Common myeloid progenitor, CD34-positive (primary cell): ENCODE measurements at regions of chr10 and their contacts with region 1.

Region 1: DNA sequence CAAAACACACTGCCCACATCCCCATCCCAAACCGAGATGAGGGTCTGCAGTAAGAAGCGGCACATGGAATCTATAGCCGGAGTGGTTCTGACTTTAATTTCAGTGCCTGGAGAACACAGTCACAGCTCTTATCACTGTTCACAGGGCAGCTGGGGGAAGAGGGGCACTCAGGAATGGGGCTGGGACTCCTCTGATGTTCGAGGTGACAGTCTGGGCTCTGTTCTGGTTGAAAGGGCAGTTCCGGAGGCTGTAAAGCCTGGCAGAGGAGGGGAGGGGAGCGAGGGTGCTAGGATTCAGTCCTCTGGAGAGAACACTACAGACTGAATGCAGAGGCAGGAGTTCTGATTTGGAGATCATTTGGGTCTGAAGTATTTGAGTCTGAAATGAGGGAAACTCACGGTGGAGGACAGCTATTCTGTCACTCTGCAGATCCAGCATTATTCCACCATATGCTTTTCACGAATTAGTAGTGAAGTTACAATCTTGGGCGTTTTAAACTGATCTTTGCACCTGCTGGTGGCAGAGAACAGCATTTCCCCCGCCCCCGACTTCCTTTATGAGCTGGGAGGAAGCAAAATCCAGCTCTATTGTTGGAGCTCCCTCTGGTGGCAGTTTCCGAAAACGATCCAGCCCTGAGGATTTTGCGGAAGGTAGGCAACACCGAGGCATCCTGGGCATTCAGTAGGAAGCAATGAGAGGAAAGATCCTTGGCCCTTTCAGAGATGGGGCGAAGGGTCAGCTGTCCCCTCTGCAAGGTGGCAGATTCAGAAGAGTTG is 22.7 kb upstream of the KCNK18 start:
- DNase-seq: peak; percentile 87 to 93 (median 92)
- H3K4me3 ChIP-seq: peak overlapping the region in 6 of 7 experiments; percentile 55 to 80 (median 68)
- H3K27ac ChIP-seq: no peak overlapping the region
- H3K4me1 ChIP-seq: peaks cover 5 to 16% (median 15%) of the 10 kb centered on the region in 4 experiments
- H3K27me3 ChIP-seq: peaks cover 21 to 49% (median 30%) of the 10 kb centered on the region in 5 experiments

Region 2: DNA sequence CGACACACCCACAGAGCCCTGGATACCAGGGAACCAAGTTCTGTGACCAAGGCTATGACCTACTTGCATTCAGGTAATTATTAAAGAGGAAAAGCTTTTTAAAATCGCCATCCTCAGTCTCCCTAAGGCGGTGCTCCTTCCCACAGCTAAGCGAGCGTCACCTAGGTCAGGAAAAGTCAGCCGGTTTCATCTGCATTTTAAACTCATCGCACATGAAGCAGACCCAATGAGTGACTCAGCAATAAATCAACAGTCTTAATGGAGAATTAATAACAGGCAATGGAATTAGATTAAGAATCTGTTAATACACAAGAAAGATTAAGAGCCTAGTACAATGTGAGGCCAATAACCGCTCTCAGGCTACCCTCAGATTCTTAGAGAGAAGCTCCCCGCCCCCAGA is 491.5 kb before region 1 on chr10:
- CTCF ChIA-PET with region 1: interaction called, 14 read pairs
- POLR2A ChIA-PET with region 1: no interaction called
- DNase-seq: no peak
- H3K4me3 ChIP-seq: no peak overlapping the region
- H3K27ac ChIP-seq: no peak overlapping the region
- H3K4me1 ChIP-seq: no peaks in the 10 kb centered on the region
- H3K27me3 ChIP-seq: peaks cover 0 to 4% (median 0%) of the 10 kb centered on the region in 5 experiments

Region 3: DNA sequence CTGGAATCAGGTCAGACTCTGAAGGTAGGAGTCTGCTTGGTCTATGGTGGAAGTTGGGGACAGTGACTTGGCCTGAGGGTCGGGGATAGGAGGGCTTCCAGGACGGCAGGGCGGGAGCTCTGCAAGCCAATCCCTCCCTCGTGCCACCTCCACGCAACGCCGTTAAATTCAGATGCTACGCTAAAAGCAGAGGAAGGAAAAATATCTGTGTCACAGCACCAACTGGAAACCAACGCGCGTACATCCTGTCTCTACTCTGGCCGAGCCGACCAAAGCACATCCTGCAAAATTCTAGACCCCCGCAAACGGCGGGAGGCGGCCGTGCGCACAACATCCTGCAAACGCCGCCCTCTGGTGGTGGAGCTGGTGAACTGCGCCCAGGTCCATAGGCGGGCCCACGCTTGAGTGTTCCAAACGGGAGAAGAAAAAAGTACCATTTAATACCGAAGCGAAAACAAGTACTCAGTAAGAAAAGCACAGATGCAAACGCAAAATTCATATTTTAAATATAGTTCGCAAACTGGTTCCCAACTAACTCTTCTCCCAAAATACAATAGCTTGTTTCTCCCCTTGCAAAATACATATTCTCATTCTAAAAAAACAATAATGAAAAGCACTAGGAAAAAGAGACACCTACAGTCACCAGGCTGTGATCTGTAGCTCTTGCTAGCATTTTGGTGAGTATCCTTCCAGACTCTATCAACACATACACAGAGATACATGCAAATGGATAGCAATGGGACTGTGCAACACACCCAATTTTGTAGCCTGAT is 386.5 kb before region 1 on chr10:
- CTCF ChIA-PET with region 1: interaction called, 21 read pairs
- POLR2A ChIA-PET with region 1: no interaction called
- DNase-seq: peak; percentile 83 to 88 (median 87)
- H3K4me3 ChIP-seq: peak overlapping the region in 5 of 7 experiments; percentile 30 to 70 (median 38)
- H3K27ac ChIP-seq: no peak overlapping the region
- H3K4me1 ChIP-seq: peaks cover 0 to 5% (median 2%) of the 10 kb centered on the region in 4 experiments
- H3K27me3 ChIP-seq: peaks cover 0 to 6% (median 0%) of the 10 kb centered on the region in 5 experiments

Region 4: DNA sequence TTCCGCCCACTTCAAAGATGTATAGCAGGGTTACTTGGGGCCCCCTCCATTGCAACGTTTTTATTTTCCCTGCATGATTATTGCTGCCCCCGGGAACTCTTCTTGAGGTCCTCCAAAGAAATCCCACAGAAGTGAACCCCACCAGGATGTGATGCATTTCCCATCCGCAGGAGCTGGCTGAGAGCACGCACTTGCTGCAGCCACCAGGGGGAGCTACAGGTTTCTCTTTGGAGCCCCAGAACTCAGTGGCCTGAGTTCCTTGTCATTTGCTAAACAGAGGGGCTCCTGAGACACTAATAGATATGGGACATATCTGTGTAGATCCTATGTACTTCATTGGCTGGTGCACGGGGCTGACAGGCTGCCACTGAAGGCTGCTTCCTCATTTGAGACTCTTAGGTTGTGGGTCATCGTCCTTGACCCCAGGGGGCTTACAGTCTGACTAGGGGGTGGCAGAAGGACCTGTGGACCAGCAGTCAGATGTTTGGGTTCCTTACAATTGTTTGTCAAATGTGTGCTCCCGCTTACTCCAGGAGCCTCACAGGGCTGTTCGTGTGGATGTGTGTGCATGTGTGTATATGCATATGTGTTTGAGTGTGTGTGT is 377.6 kb before region 1 on chr10:
- CTCF ChIA-PET with region 1: interaction called, 107 read pairs
- POLR2A ChIA-PET with region 1: no interaction called
- DNase-seq: peak; percentile 74 to 85 (median 82)
- H3K4me3 ChIP-seq: no peak overlapping the region
- H3K27ac ChIP-seq: no peak overlapping the region
- H3K4me1 ChIP-seq: no peaks in the 10 kb centered on the region
- H3K27me3 ChIP-seq: peaks cover 3 to 14% (median 8%) of the 10 kb centered on the region in 5 experiments

Region 5: DNA sequence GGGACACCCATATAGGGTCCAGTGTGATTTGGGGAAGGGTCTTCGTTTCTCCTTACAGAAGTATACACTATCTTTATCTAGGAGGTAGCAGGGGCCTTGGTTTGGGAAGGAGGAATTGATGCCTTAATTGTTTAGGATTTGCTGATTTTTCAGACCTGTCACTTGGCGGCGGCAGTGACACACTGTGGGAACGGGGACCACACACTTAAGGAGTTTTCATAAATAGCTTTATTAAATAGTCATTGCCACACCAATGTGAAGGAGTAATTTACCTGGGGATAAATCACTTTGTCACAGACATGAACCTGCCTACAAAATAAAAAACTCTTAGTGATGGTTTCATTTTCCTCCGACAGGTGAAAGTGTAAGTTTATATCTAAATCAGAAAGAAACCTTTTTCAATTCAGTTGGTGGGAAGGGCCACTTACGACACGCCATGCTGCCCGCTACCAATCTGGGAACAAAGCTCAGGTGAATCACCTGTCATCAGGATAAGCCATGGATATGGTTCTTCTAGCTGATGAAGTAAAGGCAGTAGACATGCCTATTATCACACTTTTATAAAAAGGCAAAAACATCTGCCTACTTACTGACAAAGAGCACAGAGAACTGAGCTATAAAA is 337.6 kb before region 1 on chr10:
- CTCF ChIA-PET with region 1: interaction called, 11 read pairs
- POLR2A ChIA-PET with region 1: no interaction called
- DNase-seq: peak in 1 of 3 donors; percentile 17
- H3K4me3 ChIP-seq: no peak overlapping the region
- H3K27ac ChIP-seq: no peak overlapping the region
- H3K4me1 ChIP-seq: no peaks in the 10 kb centered on the region
- H3K27me3 ChIP-seq: peaks cover 0 to 2% (median 0%) of the 10 kb centered on the region in 5 experiments

Region 6: GRCh38 chr10:117294039-117294645 is 119.5 kb after region 1 on chr10:
- CTCF ChIA-PET with region 1: no interaction called
- POLR2A ChIA-PET with region 1: no interaction called
- DNase-seq: no peak
- H3K4me3 ChIP-seq: no peak overlapping the region
- H3K27ac ChIP-seq: no peak overlapping the region
- H3K4me1 ChIP-seq: no peaks in the 10 kb centered on the region
- H3K27me3 ChIP-seq: no peaks in the 10 kb centered on the region